ENCODE measurements at regions of chr1 and their contacts with region 1.

Region 1: GRCh38 chr1:19704247-19705113 is 39.8 kb downstream of the HTR6 start:
- DNase-seq: peak; percentile 90

Region 2: DNA sequence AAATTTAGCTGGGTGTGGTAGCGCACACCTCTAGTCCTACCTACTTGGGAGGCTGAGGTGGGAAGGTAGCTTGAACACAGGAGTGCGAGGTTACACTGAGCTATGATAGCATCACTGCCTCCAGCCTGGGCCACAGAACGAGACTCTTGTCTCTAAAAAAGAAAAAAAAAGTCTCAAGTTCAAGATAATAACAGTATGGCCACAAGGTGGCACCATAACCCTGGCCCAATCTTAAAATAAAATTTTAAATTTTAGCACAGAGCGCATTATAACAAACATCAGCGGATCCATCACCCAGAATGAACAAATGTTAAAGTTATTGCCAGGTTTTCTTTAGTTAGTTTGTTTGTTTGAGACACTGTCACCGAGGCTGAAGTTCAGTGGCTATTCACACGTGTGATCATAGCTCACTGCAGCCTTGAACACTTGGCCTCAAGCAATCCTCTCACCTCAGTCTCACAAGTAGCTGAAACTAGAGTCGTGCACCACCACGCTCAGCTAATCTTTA is 42.7 kb before region 1 on chr1:
- CTCF ChIA-PET with region 1: interaction called, 53 read pairs
- POLR2A ChIA-PET with region 1: interaction called, 6 read pairs
- DNase-seq: no peak

Region 3: DNA sequence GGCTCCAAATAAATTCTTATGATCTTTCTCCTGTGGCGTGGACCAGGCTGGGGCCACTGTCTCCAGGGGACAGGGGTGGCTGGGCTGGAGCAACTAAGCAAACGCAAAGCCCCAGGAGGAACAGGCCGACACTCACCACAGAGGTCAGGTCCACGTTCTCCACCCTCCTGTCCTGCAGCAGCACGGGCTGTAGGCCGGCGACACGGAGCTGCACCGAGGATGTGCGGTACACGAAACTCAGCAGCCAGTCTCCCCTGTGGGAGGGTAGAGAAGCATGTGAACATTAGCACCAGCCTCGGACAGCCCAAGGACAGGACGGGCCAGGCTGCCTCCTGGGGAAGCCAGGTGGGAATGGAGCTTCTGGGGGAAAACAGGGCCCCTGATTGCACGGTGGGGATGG is 10.2 kb before region 1 on chr1:
- CTCF ChIA-PET with region 1: interaction called, 10 read pairs
- POLR2A ChIA-PET with region 1: interaction called, 5 read pairs
- DNase-seq: no peak

Region 4: GRCh38 chr1:19715334-19716203 is 11.1 kb after region 1 on chr1:
- CTCF ChIA-PET with region 1: interaction called, 17 read pairs
- POLR2A ChIA-PET with region 1: interaction called, 4 read pairs
- DNase-seq: peak; percentile 94

Region 5: DNA sequence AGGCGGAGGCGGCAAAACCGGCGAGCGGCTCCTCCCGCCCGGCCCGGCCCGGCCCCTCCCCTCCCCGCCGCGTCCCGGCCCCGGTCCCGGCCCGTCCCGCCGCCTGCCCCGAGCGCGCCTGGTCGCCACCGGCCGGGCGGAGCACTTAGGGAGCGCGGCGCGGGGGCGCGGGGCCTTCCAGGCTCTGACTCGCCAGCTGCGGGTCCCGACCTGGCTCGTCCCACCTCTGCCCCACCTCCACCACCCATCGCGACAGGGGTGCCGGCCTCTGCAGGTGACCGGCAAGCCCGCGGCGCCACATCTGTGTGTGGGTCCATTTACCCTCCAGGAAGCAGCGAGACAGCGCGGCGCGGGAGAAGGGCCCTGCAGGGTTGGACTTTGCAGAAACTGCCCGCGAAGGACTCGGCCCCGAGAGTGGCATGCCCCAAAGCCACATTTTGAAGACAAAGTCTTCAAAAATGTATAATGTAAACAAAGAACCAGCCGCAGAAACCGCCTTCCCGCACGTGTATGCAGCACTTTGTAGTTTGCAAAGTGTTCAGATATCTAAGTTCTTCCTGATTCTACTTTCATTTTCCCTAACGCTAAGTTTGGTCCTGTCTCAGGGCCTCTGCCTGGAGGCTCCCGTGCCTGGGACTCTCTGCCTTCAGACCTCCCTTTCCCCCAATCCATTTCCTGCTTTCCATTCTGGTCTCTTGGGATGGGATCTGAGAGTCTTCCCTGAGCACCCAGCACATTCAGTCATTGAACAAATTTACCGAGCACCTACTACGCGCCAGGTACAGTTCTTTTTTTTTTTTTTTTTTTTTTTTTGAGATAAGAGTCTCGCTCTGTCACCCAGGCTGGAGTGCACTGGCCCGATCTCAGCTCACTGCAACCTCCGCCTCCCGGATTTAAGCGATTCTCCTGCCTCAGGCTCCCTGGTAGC is 95.7 kb after region 1 on chr1 and contains the start of gene TMCO4:
- CTCF ChIA-PET with region 1: no interaction called
- POLR2A ChIA-PET with region 1: no interaction called
- DNase-seq: peak; percentile 40

Region 6: DNA sequence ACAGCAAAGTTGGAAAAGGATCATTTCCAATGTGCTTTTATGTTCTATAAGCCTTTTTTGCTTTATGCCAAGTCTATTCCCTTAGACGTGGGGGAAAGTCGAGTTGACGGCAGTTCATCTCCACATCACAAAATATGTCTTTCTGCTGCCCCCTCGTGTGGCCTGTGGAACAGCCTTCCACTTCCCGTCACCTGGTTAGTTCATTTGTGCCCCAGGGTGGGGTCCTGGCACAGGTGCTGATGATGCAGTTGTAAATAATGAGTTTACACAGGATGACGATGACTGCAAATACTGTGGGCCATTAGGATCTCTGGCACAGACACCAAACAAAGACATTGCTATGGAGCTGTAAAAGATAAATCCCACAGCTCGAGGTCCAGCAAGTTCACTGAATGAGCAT is 167.7 kb after region 1 on chr1:
- CTCF ChIA-PET with region 1: no interaction called
- POLR2A ChIA-PET with region 1: no interaction called
- DNase-seq: no peak

Measured in HEK293T (cell line).